ENCODE measurements at regions of chr19 and their contacts with region 1.

Region 1: GRCh38 chr19:7535035-7535992 is at the start of gene PNPLA6:
- DNase-seq: peak; percentile 98
- H3K4me3 Mint-ChIP-seq: peak within 1 kb of the TSS; percentile 96
- H3K27ac Mint-ChIP-seq: peak within 1 kb of the TSS; percentile 89
- H3K4me1 Mint-ChIP-seq: peaks cover 13% of the 10 kb centered on the region
- H3K27me3 Mint-ChIP-seq: no peaks in the 10 kb centered on the region
- total RNA-seq, gene PNPLA6: 122 and 125 TPM in 2 replicates

Region 2: DNA sequence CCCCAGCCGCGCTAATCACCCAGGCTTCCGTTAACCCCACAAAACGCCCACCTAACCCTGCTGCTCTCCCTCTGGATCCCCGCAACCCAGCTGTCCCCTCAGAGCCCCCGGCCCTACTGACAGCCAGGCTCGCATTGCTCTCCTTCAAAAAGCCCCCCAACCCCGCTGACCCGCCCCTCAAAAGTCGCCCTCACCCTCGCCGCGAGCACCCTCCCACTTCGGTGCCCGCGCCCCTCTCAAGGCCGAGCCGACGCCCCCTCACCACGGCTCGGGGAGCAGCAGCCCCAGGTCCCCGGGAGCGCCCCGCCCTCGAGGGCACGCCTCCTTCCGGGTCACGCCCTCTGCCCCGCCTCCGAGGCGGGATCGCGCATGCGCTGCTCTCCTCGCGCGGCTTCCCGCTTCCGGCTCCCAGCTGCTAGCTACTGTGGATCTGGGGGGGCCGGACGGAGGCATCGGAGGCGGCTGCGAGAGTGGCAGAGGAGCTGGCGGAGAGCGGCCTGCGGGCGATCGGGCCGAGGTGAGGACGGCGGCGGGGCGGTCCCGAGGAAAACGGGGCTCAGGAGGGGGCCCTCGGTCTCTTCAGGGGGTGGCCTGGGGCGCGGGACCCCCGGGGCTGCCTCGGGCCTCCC is 140.5 kb before region 1 on chr19:
- intact Hi-C with region 1: loop called (anchors 10 kb)
- DNase-seq: peak; percentile 98
- H3K4me3 Mint-ChIP-seq: peak overlapping the region; percentile 91
- H3K27ac Mint-ChIP-seq: peak overlapping the region; percentile 78
- H3K4me1 Mint-ChIP-seq: peaks cover 16% of the 10 kb centered on the region
- H3K27me3 Mint-ChIP-seq: no peaks in the 10 kb centered on the region

Region 3: GRCh38 chr19:7488736-7489353 is 46.5 kb before region 1 on chr19 and contains the start of gene PEX11G:
- intact Hi-C with region 1: loop called (anchors 1 kb)
- DNase-seq: peak; percentile 98
- H3K4me3 Mint-ChIP-seq: peak within 1 kb of the TSS; percentile 83
- H3K27ac Mint-ChIP-seq: peak within 1 kb of the TSS; percentile 91
- H3K4me1 Mint-ChIP-seq: peaks cover 26% of the 10 kb centered on the region
- H3K27me3 Mint-ChIP-seq: no peaks in the 10 kb centered on the region
- total RNA-seq, gene PEX11G: 1.1 and 1.2 TPM in 2 replicates

Region 4: GRCh38 chr19:7522072-7522922 is 13.0 kb before region 1 on chr19 and contains the start of gene MCOLN1:
- intact Hi-C with region 1: loop called (anchors 1 kb)
- DNase-seq: peak; percentile 100
- H3K4me3 Mint-ChIP-seq: peak within 1 kb of the TSS; percentile 81
- H3K27ac Mint-ChIP-seq: peak within 1 kb of the TSS; percentile 87
- H3K4me1 Mint-ChIP-seq: peaks cover 9% of the 10 kb centered on the region
- H3K27me3 Mint-ChIP-seq: peaks cover 12% of the 10 kb centered on the region
- total RNA-seq, gene MCOLN1: 13.3 and 13.7 TPM in 2 replicates

Region 5: DNA sequence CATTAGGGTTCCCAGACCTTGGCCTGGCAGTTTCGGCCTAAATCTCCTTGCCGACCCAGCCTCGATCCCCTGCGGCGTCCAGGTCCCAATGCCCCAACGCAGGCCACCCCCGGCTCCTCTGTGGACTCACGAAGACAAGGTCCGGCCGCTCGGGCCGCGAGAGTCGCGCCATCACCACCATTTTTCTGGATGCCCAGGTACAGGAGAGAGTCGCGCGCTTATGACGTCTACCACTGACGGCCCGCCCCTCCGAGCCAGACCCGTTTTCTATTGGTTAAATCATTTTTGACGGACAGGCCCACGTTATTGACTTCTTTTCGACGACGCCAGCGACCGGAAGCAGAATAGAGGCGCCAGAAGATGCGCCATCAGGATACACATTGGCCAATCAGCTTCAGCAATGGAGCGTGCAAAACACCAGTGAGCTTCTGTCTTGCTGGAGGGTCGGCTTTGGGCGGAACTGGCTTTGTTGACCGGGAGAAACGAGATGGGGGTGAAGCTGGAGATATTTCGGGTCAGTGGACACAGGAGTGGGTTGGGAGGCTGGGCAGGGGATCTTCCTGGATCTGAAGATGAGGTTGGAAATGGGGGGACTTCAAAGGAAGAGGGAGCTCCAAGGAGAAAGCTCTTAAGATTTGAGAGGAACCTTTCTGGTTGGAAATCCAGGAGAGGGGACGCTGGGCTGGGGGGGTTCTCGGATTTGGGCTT is 94.2 kb after region 1 on chr19 and contains the starts of genes PET100 and XAB2:
- intact Hi-C with region 1: loop called (anchors 1 kb)
- DNase-seq: peak; percentile 98
- H3K4me3 Mint-ChIP-seq: peak within 1 kb of the TSS; percentile 94
- H3K27ac Mint-ChIP-seq: peak within 1 kb of the TSS; percentile 98
- H3K4me1 Mint-ChIP-seq: peaks cover 33% of the 10 kb centered on the region
- H3K27me3 Mint-ChIP-seq: no peaks in the 10 kb centered on the region
- total RNA-seq, gene PET100: 99.2 and 110 TPM in 2 replicates
- total RNA-seq, gene XAB2: 51.0 and 51.6 TPM in 2 replicates

Measured in activated CD4-positive, alpha-beta T cell treated with anti-CD3 and anti-CD28 coated beads, Interleukin-2, amount 10 ng/mL, durations not matched to agents 24 days and 14 days (primary cell).